Right ventricle myocardium inferior (tissue), 1 donor: ENCODE measurements at regions of chr11 and their contacts with region 1.

Region 1: DNA sequence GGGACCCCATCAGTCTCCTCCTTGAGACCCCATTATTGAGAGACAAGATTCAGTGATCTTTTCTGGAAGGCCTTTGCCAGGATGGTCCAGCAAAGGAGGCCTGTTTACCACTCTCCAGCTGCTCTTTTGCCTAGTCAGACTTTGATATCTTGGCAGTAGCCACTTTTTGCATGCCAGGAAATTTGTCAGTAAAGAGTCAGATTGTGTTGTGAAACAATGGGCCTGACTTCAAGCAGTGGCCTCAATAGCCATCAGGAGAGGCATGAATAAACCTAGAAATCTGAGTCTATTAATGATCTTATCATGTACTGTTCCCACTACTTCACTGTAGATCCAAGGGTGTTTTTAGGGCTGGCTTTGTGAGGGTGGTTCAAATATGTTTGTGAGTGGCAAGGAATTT is 479.4 kb downstream of the JRKL start:
- DNase-seq: no peak
- ATAC-seq: peak; percentile 72

Region 2: GRCh38 chr11:96622026-96622634 is 247.1 kb before region 1 on chr11:
- intact Hi-C with region 1: loop called (anchors 10 kb)
- DNase-seq: no peak
- ATAC-seq: peak; percentile 87

Region 3: DNA sequence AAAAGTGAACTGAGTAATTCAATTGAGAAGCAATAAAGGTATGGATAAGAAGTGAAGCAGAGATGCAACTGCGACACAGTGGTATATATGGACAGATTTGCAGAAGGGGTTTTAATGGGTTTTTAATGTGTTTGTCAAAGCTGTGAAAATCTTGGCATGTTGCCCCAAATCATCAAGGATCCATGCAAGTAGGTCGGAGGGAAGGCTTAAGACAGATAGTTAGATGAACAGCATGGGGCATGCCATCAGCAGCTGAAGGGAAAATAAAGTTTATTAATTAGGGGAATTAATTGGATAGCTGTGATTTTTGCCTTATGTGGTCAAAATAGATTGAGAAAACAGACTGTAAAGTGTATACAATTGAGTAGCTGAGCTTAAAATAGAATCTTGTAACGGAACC is 360.7 kb after region 1 on chr11:
- intact Hi-C with region 1: loop called (anchors 10 kb)
- DNase-seq: no peak
- ATAC-seq: no peak

Region 4: GRCh38 chr11:97683733-97684132 is 814.5 kb after region 1 on chr11:
- intact Hi-C with region 1: loop called (anchors 10 kb)
- DNase-seq: no peak
- ATAC-seq: no peak